Dendritic cell treated with granulocyte-macrophage colony-stimulating factor and Interleukin-4, amounts not matched to agents 40 ng/mL and 50 ng/mL, for 4 days (primary cell): ENCODE measurements at regions of chr17 and their contacts with region 1.

Region 1: GRCh38 chr17:49707608-49708514 is at the start of gene SLC35B1:
- H3K4me3 Mint-ChIP-seq: peak within 1 kb of the TSS; percentile 91
- H3K27ac Mint-ChIP-seq: peak within 1 kb of the TSS; percentile 98
- H3K4me1 Mint-ChIP-seq: peaks cover 38% of the 10 kb centered on the region
- H3K27me3 Mint-ChIP-seq: no peaks in the 10 kb centered on the region

Region 2: GRCh38 chr17:49687878-49688491 is 19.9 kb before region 1 on chr17:
- intact Hi-C with region 1: no loop called
- H3K4me3 Mint-ChIP-seq: peak overlapping the region; percentile 64
- H3K27ac Mint-ChIP-seq: peak overlapping the region; percentile 93
- H3K4me1 Mint-ChIP-seq: peaks cover 61% of the 10 kb centered on the region
- H3K27me3 Mint-ChIP-seq: peaks cover 5% of the 10 kb centered on the region

Region 3: DNA sequence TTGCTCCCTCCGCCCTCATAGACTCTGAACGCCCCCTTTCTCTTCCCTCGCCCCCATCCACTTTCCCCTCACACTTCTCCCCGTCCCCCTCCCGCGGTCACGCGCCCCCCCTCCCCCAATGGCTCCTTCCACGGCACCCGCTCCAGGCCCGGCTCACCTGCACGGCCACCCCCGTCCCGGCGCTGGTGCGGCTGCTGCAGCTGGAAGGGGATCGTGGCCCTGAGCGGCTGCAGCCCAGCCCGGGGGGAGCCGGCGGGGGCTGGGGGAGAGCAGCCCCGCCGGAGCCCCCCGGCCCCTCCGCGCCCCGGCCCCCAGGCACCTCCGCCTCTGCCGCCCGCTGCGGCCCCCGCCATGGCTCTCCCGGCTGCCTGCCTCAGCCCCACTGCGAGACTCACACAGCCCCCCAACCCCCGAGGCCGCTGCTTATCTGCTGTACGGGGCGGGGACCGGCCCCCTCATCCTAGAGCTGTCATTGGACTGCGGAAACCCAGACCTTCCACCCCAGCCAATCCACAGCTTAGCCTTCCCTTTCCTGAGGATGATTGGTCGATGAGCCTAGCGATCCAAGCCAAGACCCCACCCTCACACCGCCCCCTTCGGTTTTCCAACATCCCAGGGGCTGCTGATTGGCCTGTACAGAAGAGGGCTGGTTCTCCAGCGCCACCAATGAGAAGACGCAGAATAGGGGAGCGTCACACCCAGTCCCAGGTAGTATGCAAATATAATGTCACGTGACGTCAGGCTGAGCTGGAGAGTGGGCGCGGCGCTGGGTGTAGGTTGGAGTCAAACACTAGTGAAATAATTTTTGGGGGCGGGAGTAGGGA is 56.1 kb after region 1 on chr17 and contains the start of gene FAM117A:
- intact Hi-C with region 1: loop called (anchors 5 kb)
- H3K4me3 Mint-ChIP-seq: peak within 1 kb of the TSS; percentile 88
- H3K27ac Mint-ChIP-seq: peak within 1 kb of the TSS; percentile 84
- H3K4me1 Mint-ChIP-seq: peaks cover 31% of the 10 kb centered on the region
- H3K27me3 Mint-ChIP-seq: no peaks in the 10 kb centered on the region

Region 4: GRCh38 chr17:49788478-49789242 is 80.8 kb after region 1 on chr17 and contains the start of gene KAT7:
- intact Hi-C with region 1: loop called (anchors 1 kb)
- H3K4me3 Mint-ChIP-seq: peak within 1 kb of the TSS; percentile 92
- H3K27ac Mint-ChIP-seq: peak within 1 kb of the TSS; percentile 98
- H3K4me1 Mint-ChIP-seq: peaks cover 33% of the 10 kb centered on the region
- H3K27me3 Mint-ChIP-seq: no peaks in the 10 kb centered on the region

Region 5: DNA sequence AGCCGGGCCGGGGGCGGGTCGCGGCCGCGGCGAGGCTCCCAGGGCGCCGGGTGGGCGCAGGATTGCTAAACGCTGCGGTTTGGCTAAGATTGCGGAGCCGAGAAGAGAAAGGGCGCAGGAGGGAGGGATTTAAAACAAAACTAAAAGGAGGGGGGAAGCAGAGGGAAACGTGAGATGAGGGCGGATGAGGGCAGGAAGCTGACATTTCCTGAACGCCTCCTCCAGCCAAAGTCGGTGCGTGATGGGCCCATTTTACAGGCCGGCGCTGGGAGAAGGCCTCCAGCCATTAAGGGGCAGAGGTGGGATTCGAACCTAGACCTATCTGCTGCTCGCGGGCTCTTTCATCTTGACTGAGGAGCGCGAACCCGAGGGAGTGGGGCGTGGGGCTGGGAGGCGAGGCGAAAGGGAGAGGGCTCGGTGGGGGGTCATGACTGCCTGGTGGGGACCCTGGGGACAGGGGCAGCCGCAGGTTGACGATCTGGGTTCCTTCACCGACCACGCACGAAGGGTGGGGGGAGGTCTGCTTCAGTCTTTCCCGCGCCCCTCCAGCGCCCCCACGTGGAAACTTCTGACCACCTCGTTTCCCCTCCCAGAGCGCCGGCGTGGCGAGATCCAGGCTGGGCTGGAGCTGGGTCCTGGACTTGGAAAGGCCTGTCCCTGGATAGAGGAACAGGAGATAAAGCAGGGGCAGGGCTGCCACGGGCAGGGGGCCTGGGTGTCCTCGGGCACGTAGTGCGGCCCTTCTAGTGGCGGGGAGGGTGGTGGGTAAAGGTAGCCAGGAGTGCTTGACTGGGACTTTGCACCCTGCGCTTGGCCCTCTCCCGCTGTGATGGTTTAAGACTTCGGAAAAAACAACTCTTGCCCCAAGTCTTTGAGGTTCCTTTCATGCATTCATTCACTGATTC is 143.8 kb after region 1 on chr17:
- intact Hi-C with region 1: loop called (anchors 5 kb)
- H3K4me3 Mint-ChIP-seq: peak overlapping the region; percentile 83
- H3K27ac Mint-ChIP-seq: peak overlapping the region; percentile 80
- H3K4me1 Mint-ChIP-seq: peaks cover 18% of the 10 kb centered on the region
- H3K27me3 Mint-ChIP-seq: peaks cover 46% of the 10 kb centered on the region